Activated T-helper 1 cell treated with anti-CD3 and anti-CD28 coated beads, Interleukin-12 subunit alpha, Interleukin-12 subunit beta, Interleukin-2, Interleukin-4 antibody, amounts not matched to agents 30 ng/mL and 10 ng/mL and 1 ng/mL, durations not matched to agents 14 hours and 24 hours and 36 hours (primary cell): ENCODE measurements at regions of chr9 and their contacts with region 1.

Region 1: DNA sequence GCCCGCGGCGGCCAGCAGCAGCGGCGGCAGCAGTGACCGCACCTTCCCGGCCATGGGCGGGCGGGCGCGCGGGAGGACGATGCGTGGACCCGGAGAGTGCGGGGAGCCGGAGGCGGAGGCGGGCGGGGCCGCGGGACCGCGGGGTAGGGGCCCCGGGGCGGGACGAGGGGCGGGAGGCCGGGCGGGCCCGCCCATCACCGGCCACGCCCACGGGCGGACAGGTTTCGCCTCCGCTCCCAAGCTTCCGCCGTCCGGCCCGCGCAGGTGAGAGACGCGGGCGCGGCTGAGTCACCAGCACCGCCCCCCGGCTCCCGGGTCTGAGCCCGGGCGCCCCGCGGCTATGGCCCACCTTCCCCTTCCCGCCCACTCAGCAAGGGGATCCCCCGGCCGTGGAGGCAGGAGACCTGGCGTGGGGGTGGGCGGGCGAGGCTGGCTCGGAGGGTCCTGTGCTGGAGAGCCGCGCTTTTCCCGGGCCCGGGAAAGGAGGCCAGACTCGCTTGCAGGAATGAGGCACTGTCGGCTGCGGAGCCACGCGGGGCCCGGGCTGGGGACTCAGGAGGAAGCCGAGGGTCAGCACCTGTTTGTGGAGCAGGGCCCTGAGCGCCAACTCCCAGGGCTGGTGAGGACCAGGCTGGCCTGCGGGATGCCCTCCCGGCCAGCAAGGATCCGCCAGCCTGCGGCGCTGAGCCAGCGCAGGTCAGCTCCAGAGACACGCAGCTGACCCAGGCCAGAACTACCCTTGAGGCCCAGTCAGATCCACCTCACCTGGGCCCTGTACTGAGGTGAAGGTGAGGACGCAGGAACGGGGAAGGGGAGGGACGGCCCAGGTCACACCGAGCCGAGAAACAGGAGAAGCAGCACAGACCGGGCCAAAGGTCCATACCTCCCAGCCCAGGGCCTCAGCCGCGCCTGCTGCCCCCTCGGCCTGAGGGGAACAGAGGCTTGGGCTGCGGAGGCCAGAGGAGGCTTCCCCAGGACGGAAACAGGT is at the start of gene ENTPD2:
- DNase-seq: peak; percentile 28
- H3K4me3 Mint-ChIP-seq: no peak within 1 kb of the TSS
- H3K27ac Mint-ChIP-seq: no peak within 1 kb of the TSS
- H3K4me1 Mint-ChIP-seq: no peaks in the 10 kb centered on the region
- H3K27me3 Mint-ChIP-seq: peaks cover 31% of the 10 kb centered on the region
- total RNA-seq, gene ENTPD2: not detected in 2 replicates

Region 2: GRCh38 chr9:136928591-136928990 is 125.6 kb before region 1 on chr9:
- intact Hi-C with region 1: no loop called
- DNase-seq: no peak
- H3K4me3 Mint-ChIP-seq: no peak overlapping the region
- H3K27ac Mint-ChIP-seq: peak overlapping the region; percentile 44
- H3K4me1 Mint-ChIP-seq: peaks cover 24% of the 10 kb centered on the region
- H3K27me3 Mint-ChIP-seq: no peaks in the 10 kb centered on the region

Region 3: GRCh38 chr9:137064027-137064879 is 10.0 kb after region 1 on chr9:
- intact Hi-C with region 1: loop called (anchors 1 kb)
- DNase-seq: peak; percentile 48
- H3K4me3 Mint-ChIP-seq: no peak overlapping the region
- H3K27ac Mint-ChIP-seq: no peak overlapping the region
- H3K4me1 Mint-ChIP-seq: peaks cover 7% of the 10 kb centered on the region
- H3K27me3 Mint-ChIP-seq: peaks cover 6% of the 10 kb centered on the region

Region 4: GRCh38 chr9:137590462-137591383 is 536.5 kb after region 1 on chr9 and contains the start of gene ZMYND19:
- intact Hi-C with region 1: no loop called
- DNase-seq: peak; percentile 90
- H3K4me3 Mint-ChIP-seq: peak within 1 kb of the TSS; percentile 99
- H3K27ac Mint-ChIP-seq: peak within 1 kb of the TSS; percentile 97
- H3K4me1 Mint-ChIP-seq: peaks cover 21% of the 10 kb centered on the region
- H3K27me3 Mint-ChIP-seq: peaks cover 1% of the 10 kb centered on the region
- total RNA-seq, gene ZMYND19: 88.2 and 94.9 TPM in 2 replicates